Activated CD4-positive, alpha-beta memory T cell treated with anti-CD3 and anti-CD28 coated beads, Interleukin-2, amount 10 ng/mL, durations not matched to agents 7 days and 5 days (primary cell): ENCODE measurements at regions of chr20 and their contacts with region 1.

Region 1: DNA sequence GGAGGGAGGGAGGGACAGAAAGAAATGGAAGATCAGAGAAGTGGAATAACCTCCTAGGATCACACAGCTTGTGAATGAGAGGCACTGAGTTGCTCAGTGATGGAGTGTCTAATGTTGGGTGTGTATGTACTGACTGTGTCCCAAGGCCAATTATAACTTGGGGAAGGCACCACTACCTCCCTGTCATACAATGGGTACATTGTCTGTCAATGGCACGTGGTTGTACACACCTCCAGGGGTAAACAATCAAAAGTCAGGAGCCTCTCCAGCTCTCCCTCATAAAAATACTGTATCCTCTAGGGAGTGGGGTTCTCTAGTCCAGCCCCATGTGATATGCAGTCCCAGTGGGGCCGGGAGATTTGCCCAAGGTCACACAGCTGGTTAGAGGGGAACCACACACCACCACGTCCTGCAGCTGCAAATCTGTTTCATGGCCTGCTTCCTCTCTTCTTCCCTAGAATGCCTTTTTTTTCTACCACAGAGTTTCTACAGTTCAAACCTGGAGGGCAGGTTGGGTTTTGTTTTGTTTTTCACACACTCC is 112.5 kb downstream of the SNX5 start:
- DNase-seq: peak; percentile 36
- H3K4me3 Mint-ChIP-seq: no peak overlapping the region
- H3K27ac Mint-ChIP-seq: peak overlapping the region; percentile 71
- H3K4me1 Mint-ChIP-seq: peaks cover 53% of the 10 kb centered on the region
- H3K27me3 Mint-ChIP-seq: peaks cover 14% of the 10 kb centered on the region

Region 2: GRCh38 chr20:17843246-17844132 is 12.6 kb before region 1 on chr20:
- CTCF ChIA-PET with region 1: no interaction called
- POLR2A ChIA-PET with region 1: interaction called, 33 read pairs
- DNase-seq: peak; percentile 79
- H3K4me3 Mint-ChIP-seq: no peak overlapping the region
- H3K27ac Mint-ChIP-seq: peak overlapping the region; percentile 66
- H3K4me1 Mint-ChIP-seq: peaks cover 62% of the 10 kb centered on the region
- H3K27me3 Mint-ChIP-seq: peaks cover 8% of the 10 kb centered on the region